Ascending aorta (tissue), 2 donors: ENCODE measurements at regions of chr2 and their contacts with region 1.

Region 1: DNA sequence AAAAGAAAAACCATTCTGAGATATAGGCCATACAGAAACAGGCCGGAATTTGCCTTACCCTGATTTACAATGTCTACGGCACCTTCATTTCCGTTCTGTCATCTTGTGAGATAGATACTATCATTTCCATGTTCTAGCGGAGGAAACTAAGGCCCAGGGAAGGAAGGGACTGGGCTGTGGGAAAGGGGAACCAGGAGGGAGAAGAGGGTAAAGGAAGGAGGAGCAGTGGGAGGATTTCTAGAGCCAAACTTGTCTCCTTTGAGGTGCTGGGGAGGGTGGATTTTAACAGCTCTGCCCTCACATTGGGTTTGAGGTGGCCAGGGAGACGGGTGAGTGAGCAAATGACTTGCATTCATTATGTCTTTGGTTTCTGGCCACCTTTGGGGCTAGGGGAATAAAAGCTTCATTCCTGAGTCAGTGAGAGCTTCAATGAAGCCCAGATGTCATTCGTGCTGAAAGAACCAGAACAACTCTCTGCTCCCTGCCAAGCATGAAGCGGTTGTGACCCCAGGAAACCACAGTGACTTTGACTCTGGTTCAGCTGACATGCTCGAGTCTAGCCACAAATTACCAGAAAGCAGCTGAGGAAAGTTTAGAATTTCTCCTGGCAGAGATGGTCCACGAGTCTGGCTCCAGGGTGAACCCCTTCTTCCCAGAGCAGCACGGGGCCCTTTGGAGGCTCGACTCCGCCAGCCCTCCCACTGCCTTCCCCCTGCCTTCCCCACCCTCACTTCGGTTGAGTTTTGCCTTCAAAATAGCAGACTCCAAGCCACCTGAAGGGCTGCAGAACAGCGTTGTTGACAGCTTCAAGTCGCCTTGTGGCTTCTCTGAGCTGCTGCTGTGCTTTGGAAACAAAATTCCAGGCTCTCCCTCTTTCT is 3.8 kb downstream of the ACTG2 start:
- DNase-seq: no peak
- H3K4me3 ChIP-seq: peak overlapping the region; percentile 4 to 65
- H3K27ac ChIP-seq: peak overlapping the region; percentile 87 to 91
- H3K4me1 ChIP-seq: peaks cover 5 to 11% of the 10 kb centered on the region in 2 donors
- H3K27me3 ChIP-seq: no peaks in the 10 kb centered on the region
- CTCF ChIP-seq: no peak

Region 2: DNA sequence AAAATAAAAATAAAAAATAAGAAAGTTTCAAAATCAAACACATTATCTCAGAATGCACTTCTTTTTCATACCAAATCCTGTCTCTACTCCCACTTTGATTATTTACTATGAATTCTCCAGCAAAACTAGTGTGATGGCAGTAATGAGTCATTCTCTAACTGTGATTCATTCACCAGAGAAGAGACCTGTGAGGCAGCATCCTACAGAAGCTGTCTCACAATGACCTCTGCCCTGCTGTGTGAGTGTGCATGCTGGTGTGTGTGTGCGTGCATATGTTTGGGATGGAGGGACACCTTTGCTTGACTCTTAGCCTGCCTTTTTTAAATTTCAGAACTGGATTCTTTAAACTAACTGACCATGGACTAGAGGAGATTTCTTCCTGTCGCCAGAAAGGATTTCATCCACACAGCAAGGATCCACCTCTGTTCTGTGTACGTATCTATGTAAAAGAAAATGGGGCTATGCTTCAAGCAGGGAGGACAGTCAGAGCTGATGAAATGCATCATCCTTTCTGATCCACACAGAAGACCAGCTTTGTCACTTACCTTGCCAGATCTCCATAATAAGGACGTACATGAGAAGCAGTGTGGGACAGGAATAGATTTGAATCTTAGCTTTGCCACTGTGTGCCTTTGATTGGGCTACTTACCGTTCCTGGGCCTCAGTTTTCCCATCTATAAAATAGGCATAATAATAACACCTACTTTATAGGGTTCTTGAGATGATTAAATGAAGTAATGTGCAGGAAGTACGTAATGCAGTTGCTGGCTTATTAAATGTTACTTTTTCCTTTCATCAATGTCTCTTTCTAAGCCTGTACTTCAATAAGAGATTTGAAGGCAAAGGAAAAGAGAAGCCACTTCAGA is 36.6 kb before region 1 on chr2:
- intact Hi-C with region 1: loop called (anchors 5 kb)
- DNase-seq: no peak
- H3K4me3 ChIP-seq: no peak overlapping the region
- H3K27ac ChIP-seq: no peak overlapping the region
- H3K4me1 ChIP-seq: no peaks in the 10 kb centered on the region
- H3K27me3 ChIP-seq: no peaks in the 10 kb centered on the region
- CTCF ChIP-seq: no peak

Region 3: GRCh38 chr2:73870084-73870483 is 26.5 kb before region 1 on chr2:
- intact Hi-C with region 1: loop called (anchors 1 kb)
- DNase-seq: peak; percentile 29 to 94
- H3K4me3 ChIP-seq: no peak overlapping the region
- H3K27ac ChIP-seq: peak overlapping the region; percentile 80 to 86
- H3K4me1 ChIP-seq: peaks cover 0 to 9% of the 10 kb centered on the region in 2 donors
- H3K27me3 ChIP-seq: no peaks in the 10 kb centered on the region
- CTCF ChIP-seq: no peak

Region 4: GRCh38 chr2:73944714-73945113 is 48.1 kb after region 1 on chr2:
- intact Hi-C with region 1: no loop called
- DNase-seq: no peak
- H3K4me3 ChIP-seq: no peak overlapping the region
- H3K27ac ChIP-seq: no peak overlapping the region
- H3K4me1 ChIP-seq: no peaks in the 10 kb centered on the region
- H3K27me3 ChIP-seq: no peaks in the 10 kb centered on the region
- CTCF ChIP-seq: no peak

Region 5: GRCh38 chr2:74104839-74105238 is 208.2 kb after region 1 on chr2:
- intact Hi-C with region 1: no loop called
- DNase-seq: no peak
- H3K4me3 ChIP-seq: no peak overlapping the region
- H3K27ac ChIP-seq: no peak overlapping the region
- H3K4me1 ChIP-seq: no peaks in the 10 kb centered on the region
- H3K27me3 ChIP-seq: no peaks in the 10 kb centered on the region
- CTCF ChIP-seq: peak in 1 of 3 experiments; percentile 13